ENCODE measurements at regions of chr6 and their contacts with region 1.

Region 1: GRCh38 chr6:150377211-150377781 is 8.5 kb downstream of the IYD start:
- DNase-seq: no peak
- ATAC-seq: no peak
- H3K4me3 ChIP-seq: no peak overlapping the region
- H3K27ac ChIP-seq: no peak overlapping the region
- H3K4me1 ChIP-seq: peaks cover 0 to 2% of the 10 kb centered on the region in 2 donors
- H3K27me3 ChIP-seq: no peaks in the 10 kb centered on the region

Region 2: DNA sequence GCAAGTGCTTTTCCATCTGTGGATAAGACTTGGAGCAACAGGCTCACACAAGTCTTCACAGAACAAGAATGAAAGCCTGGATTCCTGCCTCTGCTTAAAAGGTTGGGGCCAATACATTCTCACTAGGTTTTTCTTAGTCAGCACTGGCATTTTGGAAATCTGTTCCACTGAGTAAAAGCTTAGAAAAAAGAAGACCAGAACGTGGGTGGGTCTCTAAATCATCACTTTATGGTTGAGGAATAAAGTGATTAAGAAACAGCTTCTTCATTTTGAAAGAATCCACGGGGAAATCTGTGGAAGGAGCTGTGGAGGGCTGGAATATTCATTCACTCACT is 223.8 kb before region 1 on chr6:
- intact Hi-C with region 1: loop called in 1 of 2 experiments (anchors 10 kb)
- DNase-seq: no peak
- ATAC-seq: no peak
- H3K4me3 ChIP-seq: no peak overlapping the region
- H3K27ac ChIP-seq: no peak overlapping the region
- H3K4me1 ChIP-seq: no peaks in the 10 kb centered on the region
- H3K27me3 ChIP-seq: peaks cover 0 to 3% of the 10 kb centered on the region in 2 donors